HepG2 (cell line): ENCODE measurements at regions of chr3 and their contacts with region 1.

Region 1: GRCh38 chr3:194472290-194472920 is 14.4 kb downstream of the ATP13A3 start:
- DNase-seq: peak; percentile 58
- ATAC-seq: peak; percentile 90
- H3K4me3 ChIP-seq: no peak overlapping the region
- H3K27ac ChIP-seq: no peak overlapping the region
- H3K4me1 ChIP-seq: peaks cover 59% of the 10 kb centered on the region
- H3K27me3 ChIP-seq: no peaks in the 10 kb centered on the region
- CTCF ChIP-seq: peak; percentile 85
- EP300 ChIP-seq: no peak
- POLR2A ChIP-seq: no peak
- RAD21 ChIP-seq: peak; percentile 78

Region 2: GRCh38 chr3:194375473-194376240 is 96.7 kb before region 1 on chr3:
- CTCF ChIA-PET with region 1: no interaction called
- POLR2A ChIA-PET with region 1: no interaction called
- in situ Hi-C with region 1: no loop called
- intact Hi-C with region 1: no loop called
- DNase-seq: no peak
- ATAC-seq: no peak
- H3K4me3 ChIP-seq: no peak overlapping the region
- H3K27ac ChIP-seq: no peak overlapping the region
- H3K4me1 ChIP-seq: no peaks in the 10 kb centered on the region
- H3K27me3 ChIP-seq: peaks cover 4 to 57% of the 10 kb centered on the region in 2 experiments
- CTCF ChIP-seq: no peak
- EP300 ChIP-seq: no peak
- POLR2A ChIP-seq: no peak
- RAD21 ChIP-seq: no peak

Region 3: DNA sequence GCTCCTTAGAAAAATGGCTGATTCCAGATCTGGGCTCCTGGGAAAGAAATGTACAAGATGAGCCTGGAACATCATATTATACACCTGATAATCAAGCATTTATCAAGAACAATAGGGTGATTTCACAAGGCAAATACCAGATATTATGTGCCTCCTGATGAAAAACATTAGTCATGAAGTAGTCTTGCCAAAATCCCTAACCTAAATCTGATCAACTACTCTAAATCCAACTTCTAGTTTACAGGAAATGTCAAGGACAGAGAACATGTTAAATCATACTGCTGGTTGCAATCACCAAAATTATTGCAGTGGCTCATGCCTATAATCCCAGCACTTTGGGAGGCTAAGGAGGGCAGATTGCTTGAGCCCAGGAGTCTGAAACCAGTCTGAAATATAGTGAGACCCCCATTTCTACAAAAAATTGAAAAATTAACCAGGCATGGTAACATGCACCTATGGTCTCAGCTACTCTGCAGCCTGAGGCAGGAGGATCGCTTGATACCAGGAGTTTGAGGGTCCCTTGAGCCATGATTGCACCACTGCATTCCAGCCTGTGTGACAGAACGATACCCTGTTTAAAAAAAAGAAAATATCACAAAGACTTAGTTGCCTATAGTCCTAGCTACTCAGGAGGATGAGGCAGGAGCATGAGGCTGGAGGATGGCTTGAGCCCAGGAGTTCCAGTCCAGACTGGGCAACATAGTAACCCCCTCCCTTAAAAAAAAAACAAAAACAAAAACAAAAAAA is 49.3 kb after region 1 on chr3:
- CTCF ChIA-PET with region 1: interaction called, 4 read pairs
- POLR2A ChIA-PET with region 1: no interaction called
- in situ Hi-C with region 1: no loop called
- intact Hi-C with region 1: loop called (anchors 1 kb)
- DNase-seq: no peak
- ATAC-seq: no peak
- H3K4me3 ChIP-seq: no peak overlapping the region
- H3K27ac ChIP-seq: no peak overlapping the region
- H3K4me1 ChIP-seq: peaks cover 50% of the 10 kb centered on the region
- H3K27me3 ChIP-seq: no peaks in the 10 kb centered on the region
- CTCF ChIP-seq: no peak
- EP300 ChIP-seq: no peak
- POLR2A ChIP-seq: no peak
- RAD21 ChIP-seq: no peak

Region 4: DNA sequence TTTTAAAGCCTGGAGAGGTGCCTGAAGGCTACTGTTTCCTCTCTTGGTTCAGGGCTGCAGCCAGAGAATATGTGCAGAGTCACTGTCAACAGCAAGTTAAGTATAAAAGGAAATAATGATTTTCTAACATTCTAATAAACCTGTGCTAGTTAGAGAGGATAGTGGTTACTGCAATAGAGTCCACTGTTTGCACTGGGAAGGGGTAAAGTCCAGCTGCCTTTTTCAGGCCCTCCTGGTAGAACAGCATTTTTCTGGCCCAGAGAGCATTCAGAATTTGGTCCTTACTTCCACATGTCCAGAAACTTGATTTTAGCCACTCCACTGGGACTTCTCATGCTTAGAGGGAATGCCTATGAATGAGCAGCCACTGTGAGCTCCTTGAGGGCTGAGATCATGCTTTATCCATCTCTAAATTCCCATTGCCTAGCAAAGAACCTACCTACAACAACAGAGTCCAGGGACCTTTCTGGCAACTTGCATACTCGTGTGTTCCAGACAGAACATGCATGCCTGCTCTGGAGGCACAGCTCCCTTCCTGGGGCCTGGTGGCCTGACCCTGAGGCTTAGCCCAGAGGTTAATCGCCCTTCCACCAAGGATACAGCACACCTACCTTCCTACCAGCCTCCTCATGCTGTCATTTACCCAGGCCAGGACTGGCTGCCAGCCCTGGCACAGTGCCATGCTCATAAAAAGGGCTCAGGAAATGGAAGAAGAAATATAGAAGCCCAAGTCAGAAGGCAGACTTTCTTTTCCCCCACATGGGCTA is 64.6 kb after region 1 on chr3:
- CTCF ChIA-PET with region 1: no interaction called
- POLR2A ChIA-PET with region 1: interaction called, 5 read pairs
- in situ Hi-C with region 1: no loop called
- intact Hi-C with region 1: loop called (anchors 1 kb)
- DNase-seq: peak; percentile 70
- ATAC-seq: peak; percentile 90
- H3K4me3 ChIP-seq: peak overlapping the region in 2 of 3 experiments; percentile 42 to 57; a peak in 5 of 6 replicates
- H3K27ac ChIP-seq: peak overlapping the region; percentile 91
- H3K4me1 ChIP-seq: peaks cover 49% of the 10 kb centered on the region
- H3K27me3 ChIP-seq: no peaks in the 10 kb centered on the region
- CTCF ChIP-seq: no peak
- EP300 ChIP-seq: peak in 1 of 2 experiments; percentile 67; a peak in 2 of 4 replicates
- POLR2A ChIP-seq: 0 out of 4 replicates have a peak, but pooled peaks of 1 of the 2 experiments have one; percentile 25
- RAD21 ChIP-seq: no peak

Region 5: GRCh38 chr3:194573691-194574437 is 101.5 kb after region 1 on chr3:
- CTCF ChIA-PET with region 1: interaction called, 11 read pairs
- POLR2A ChIA-PET with region 1: no interaction called
- in situ Hi-C with region 1: loop called (anchors 5 kb)
- intact Hi-C with region 1: loop called (anchors 1 kb)
- DNase-seq: peak; percentile 48
- ATAC-seq: peak; percentile 89
- H3K4me3 ChIP-seq: no peak overlapping the region; a peak in 1 of 6 replicates
- H3K27ac ChIP-seq: no peak overlapping the region
- H3K4me1 ChIP-seq: peaks cover 64% of the 10 kb centered on the region
- H3K27me3 ChIP-seq: no peaks in the 10 kb centered on the region
- CTCF ChIP-seq: peak; percentile 95
- EP300 ChIP-seq: no peak
- POLR2A ChIP-seq: no peak
- RAD21 ChIP-seq: peak; percentile 75

Region 6: GRCh38 chr3:194583604-194584318 is 111.4 kb after region 1 on chr3:
- CTCF ChIA-PET with region 1: no interaction called
- POLR2A ChIA-PET with region 1: interaction called, 13 read pairs
- in situ Hi-C with region 1: no loop called
- intact Hi-C with region 1: no loop called
- DNase-seq: peak; percentile 81
- ATAC-seq: peak; percentile 91
- H3K4me3 ChIP-seq: peak overlapping the region; percentile 82 to 88 (median 86)
- H3K27ac ChIP-seq: peak overlapping the region; percentile 78
- H3K4me1 ChIP-seq: peaks cover 29% of the 10 kb centered on the region
- H3K27me3 ChIP-seq: no peaks in the 10 kb centered on the region; a peak in 1 of 5 replicates
- CTCF ChIP-seq: no peak
- EP300 ChIP-seq: no peak
- POLR2A ChIP-seq: peak; percentile 95 to 98
- RAD21 ChIP-seq: no peak

Region 7: DNA sequence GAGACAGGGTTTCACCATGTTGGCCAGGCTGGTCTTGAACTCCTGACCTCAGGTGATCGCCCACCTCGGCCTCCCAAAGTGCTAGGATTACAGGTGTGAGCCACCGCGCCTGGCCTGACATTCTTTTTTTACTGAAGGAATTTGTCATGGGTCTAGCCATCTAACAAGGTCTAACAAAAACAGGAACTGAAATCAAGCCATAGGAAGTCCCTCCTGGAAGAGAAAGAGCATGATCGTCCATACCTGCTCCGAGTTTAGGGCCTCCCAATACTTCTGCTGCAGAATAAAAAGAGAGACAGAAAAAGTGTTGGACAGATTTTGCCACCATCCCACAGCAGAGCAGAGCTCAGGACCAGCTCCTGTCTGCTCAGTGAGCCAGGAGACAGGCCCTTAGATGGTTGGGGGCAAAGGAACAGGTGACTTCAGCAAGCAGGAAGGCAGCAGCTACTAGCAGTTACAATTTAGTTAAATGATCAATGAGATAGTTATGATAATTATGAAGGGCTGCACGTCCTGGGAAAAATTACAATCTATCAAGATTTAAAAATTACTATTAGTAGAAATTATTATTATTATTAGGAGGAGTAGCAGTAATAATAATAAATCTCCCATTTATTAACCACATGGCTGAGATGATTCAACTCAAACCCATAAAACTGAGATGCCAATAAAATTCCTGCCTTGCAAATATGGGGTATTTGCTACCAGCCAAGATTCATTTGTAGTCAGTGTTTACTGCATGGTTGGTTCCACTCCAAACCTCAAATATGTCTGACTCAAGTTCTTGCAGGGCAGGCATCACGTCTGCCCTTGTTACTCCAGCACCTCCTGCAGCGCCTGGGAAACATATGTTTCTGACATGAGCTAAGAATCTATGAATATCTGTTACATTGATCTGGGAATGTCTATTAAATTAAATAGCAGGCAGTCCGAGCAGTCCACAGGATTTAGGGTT is 120.7 kb after region 1 on chr3:
- CTCF ChIA-PET with region 1: interaction called, 10 read pairs
- POLR2A ChIA-PET with region 1: no interaction called
- in situ Hi-C with region 1: no loop called
- intact Hi-C with region 1: loop called (anchors 1 kb)
- DNase-seq: no peak
- ATAC-seq: no peak
- H3K4me3 ChIP-seq: no peak overlapping the region
- H3K27ac ChIP-seq: no peak overlapping the region
- H3K4me1 ChIP-seq: no peaks in the 10 kb centered on the region
- H3K27me3 ChIP-seq: no peaks in the 10 kb centered on the region
- CTCF ChIP-seq: no peak
- EP300 ChIP-seq: no peak
- POLR2A ChIP-seq: no peak
- RAD21 ChIP-seq: no peak